Activated B cell treated with CpG ODN at 0.5 μM for 24 hours (primary cell): ENCODE measurements at regions of chr19 and their contacts with region 1.

Region 1: DNA sequence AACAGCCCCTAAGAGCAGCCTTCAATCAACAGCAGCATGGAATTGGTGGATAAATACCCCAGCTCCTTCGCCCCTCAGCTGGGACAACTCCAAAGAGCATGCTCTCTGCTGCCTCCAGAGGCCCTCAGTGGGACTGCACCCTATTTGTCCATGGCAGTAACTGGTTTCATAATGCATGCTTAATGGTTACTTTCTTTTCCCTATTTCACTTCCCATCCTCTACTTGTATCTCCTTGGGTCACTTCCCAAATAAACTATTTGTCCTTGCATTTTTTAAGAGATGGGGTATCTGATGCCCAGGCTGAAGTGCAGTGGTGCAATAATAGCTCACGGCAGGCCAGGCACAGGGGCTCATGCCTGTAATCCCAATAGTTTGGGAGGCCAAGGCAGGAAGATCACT is 13.5 kb upstream of the TPM4 start:
- DNase-seq: peak; percentile 63
- ATAC-seq: peak; percentile 92
- H3K4me3 Mint-ChIP-seq: no peak overlapping the region
- H3K27ac Mint-ChIP-seq: no peak overlapping the region
- H3K4me1 Mint-ChIP-seq: peaks cover 10% of the 10 kb centered on the region
- H3K27me3 Mint-ChIP-seq: peaks cover 3% of the 10 kb centered on the region
- CTCF ChIP-seq: peak; percentile 80

Region 2: DNA sequence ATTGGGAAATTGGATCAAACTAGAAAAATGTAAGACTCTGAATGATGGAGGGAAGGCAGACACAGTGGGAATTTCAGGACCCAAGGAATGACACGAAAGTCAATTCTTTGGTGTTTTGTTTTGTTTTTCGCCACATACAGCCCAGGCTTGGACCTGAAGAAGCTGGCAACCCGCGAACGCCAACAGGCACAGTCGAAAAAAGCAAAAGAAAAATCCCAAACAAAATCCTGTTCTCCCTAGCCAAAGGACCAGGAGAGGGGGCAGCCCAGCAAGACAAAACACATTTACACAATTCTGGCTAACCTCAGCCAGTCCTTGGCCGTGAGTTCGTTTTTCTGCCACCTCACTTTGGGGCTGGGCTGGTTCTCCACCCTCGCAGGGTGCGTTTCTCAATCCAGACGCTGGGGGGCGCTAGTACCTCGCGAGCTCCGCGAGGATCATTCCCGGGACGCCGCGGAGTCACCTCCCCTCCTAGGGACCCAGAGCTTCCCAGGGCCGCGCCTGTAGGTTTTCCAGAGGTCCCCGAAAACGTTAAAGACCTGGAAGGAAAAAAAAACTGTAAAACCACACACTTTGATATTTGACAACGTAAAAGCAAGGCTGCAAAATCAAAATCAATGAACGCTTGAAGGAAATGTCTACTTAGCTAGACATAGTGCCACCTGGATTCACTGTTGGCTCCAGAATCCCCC is 21.3 kb before region 1 on chr19:
- CTCF ChIA-PET with region 1: interaction called, 19 read pairs
- POLR2A ChIA-PET with region 1: no interaction called
- intact Hi-C with region 1: no loop called
- DNase-seq: peak; percentile 75
- ATAC-seq: peak; percentile 90
- H3K4me3 Mint-ChIP-seq: peak overlapping the region; percentile 19
- H3K27ac Mint-ChIP-seq: no peak overlapping the region
- H3K4me1 Mint-ChIP-seq: peaks cover 6% of the 10 kb centered on the region
- H3K27me3 Mint-ChIP-seq: peaks cover 2% of the 10 kb centered on the region
- CTCF ChIP-seq: peak; percentile 40

Region 3: GRCh38 chr19:16470911-16471811 is 408.4 kb after region 1 on chr19:
- CTCF ChIA-PET with region 1: no interaction called
- POLR2A ChIA-PET with region 1: no interaction called
- intact Hi-C with region 1: no loop called
- DNase-seq: peak; percentile 37
- ATAC-seq: peak; percentile 2
- H3K4me3 Mint-ChIP-seq: peak overlapping the region; percentile 86
- H3K27ac Mint-ChIP-seq: peak overlapping the region; percentile 7
- H3K4me1 Mint-ChIP-seq: peaks cover 43% of the 10 kb centered on the region
- H3K27me3 Mint-ChIP-seq: no peaks in the 10 kb centered on the region
- CTCF ChIP-seq: no peak